HEK293 (cell line): ENCODE measurements at regions of chr15 and their contacts with region 1.

Region 1: GRCh38 chr15:74835307-74835823 is 7.6 kb downstream of the ULK3 start:
- H3K4me3 ChIP-seq: no peak overlapping the region
- H3K27ac ChIP-seq: no peak overlapping the region
- H3K4me1 ChIP-seq: no peaks in the 10 kb centered on the region
- CTCF ChIP-seq: peak; percentile 93

Region 2: GRCh38 chr15:74816808-74817674 is 18.3 kb before region 1 on chr15:
- CTCF ChIA-PET with region 1: interaction called, 11 read pairs
- POLR2A ChIA-PET with region 1: no interaction called
- H3K4me3 ChIP-seq: no peak overlapping the region
- H3K27ac ChIP-seq: no peak overlapping the region
- H3K4me1 ChIP-seq: no peaks in the 10 kb centered on the region
- CTCF ChIP-seq: peak; percentile 21; the same call in 1 of the 2 replicates